H1 (cell line): ENCODE measurements at regions of chr20 and their contacts with region 1.

Region 1: GRCh38 chr20:36886859-36887751 is 11.2 kb downstream of the TLDC2 start:
- DNase-seq: peak; percentile 86 to 99
- H3K4me3 ChIP-seq: 0 out of 8 replicates have a peak overlapping the region, but pooled peaks of 1 of the 4 experiments have one; percentile 19
- H3K27ac ChIP-seq: no peak overlapping the region; the same call in 1 of the 2 replicates
- H3K4me1 ChIP-seq: peaks cover 4 to 12% (median 7%) of the 10 kb centered on the region in 4 experiments
- H3K27me3 ChIP-seq: no peaks in the 10 kb centered on the region
- CTCF ChIP-seq: peak; percentile 92 to 98 (median 92)
- EP300 ChIP-seq: no peak; a peak in 1 of 3 replicates
- POLR2A ChIP-seq: no peak
- RAD21 ChIP-seq: peak; percentile 98

Region 2: DNA sequence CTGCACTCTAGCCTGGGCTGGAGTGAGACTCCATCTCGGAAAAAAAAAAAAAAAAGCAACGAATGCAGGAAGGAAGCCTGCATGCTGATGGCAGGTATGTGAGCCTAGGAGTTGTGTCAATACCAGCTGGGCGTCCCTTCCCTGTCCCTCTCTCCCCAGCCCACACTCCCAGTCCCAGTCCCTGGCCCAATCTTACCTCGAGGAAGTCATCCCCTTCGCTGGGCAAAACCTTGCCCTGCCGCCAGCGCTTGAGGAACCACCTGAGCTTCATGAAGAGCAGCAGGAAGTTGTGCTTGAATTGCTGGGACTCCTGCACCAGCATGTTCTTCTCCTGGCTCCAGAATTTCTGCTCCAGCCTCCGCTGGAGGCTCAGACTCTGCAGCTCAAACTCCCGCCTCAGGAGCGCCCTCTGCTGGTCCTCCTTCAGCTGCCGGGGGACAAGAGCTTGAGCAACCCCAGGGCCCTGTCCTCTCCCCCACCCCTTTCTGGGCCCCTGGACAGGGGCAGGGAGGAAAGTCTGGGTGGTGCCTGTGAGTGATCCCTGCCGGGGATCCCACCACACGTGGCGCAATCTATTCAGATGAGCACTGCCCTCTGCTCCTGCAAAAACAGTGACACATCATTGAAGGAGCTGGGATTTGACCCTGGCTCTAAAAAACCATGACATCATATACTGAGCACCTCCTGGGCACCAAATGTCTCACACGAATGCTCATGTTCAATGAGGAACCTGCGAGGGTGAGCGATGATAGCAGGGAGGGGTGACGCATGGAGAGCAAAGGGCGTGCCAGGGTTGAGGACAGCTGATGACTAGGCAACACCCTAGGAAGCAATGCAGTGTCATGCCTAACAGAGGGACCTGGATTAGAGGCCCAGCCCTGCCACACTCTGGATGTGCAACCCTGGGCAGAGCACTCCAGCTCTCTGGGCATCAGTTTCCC is 78.5 kb before region 1 on chr20:
- CTCF ChIA-PET with region 1: interaction called, 15 read pairs
- POLR2A ChIA-PET with region 1: no interaction called
- DNase-seq: peak; percentile 29 to 93
- H3K4me3 ChIP-seq: no peak overlapping the region
- H3K27ac ChIP-seq: no peak overlapping the region
- H3K4me1 ChIP-seq: no peaks in the 10 kb centered on the region
- H3K27me3 ChIP-seq: no peaks in the 10 kb centered on the region
- CTCF ChIP-seq: peak; percentile 82 to 84 (median 83)
- EP300 ChIP-seq: no peak
- POLR2A ChIP-seq: no peak
- RAD21 ChIP-seq: peak; percentile 50 to 63; a peak in 3 of 4 replicates

Region 3: GRCh38 chr20:36835453-36836198 is 51.5 kb before region 1 on chr20:
- CTCF ChIA-PET with region 1: interaction called, 17 read pairs
- POLR2A ChIA-PET with region 1: interaction called, 3 read pairs
- DNase-seq: peak; percentile 76 to 87
- H3K4me3 ChIP-seq: peak overlapping the region; percentile 1 to 52 (median 18); a peak in 4 of 8 replicates
- H3K27ac ChIP-seq: peak overlapping the region; percentile 52; the same call in 1 of the 2 replicates
- H3K4me1 ChIP-seq: peaks cover 0 to 7% (median 4%) of the 10 kb centered on the region in 4 experiments; a peak in 4 of 7 replicates
- H3K27me3 ChIP-seq: no peaks in the 10 kb centered on the region
- CTCF ChIP-seq: no peak
- EP300 ChIP-seq: no peak
- POLR2A ChIP-seq: peak in 1 of 2 experiments; percentile 82; a peak in 2 of 3 replicates
- RAD21 ChIP-seq: no peak

Region 4: GRCh38 chr20:36856691-36857635 is 30.1 kb before region 1 on chr20:
- CTCF ChIA-PET with region 1: interaction called, 13 read pairs
- POLR2A ChIA-PET with region 1: interaction called, 3 read pairs
- DNase-seq: no peak
- H3K4me3 ChIP-seq: no peak overlapping the region
- H3K27ac ChIP-seq: no peak overlapping the region
- H3K4me1 ChIP-seq: peaks cover 0 to 21% (median 16%) of the 10 kb centered on the region in 4 experiments; a peak in 6 of 7 replicates
- H3K27me3 ChIP-seq: peaks cover 0 to 3% (median 1%) of the 10 kb centered on the region in 4 experiments; a peak in 3 of 7 replicates
- CTCF ChIP-seq: no peak
- EP300 ChIP-seq: no peak
- POLR2A ChIP-seq: no peak
- RAD21 ChIP-seq: no peak

Region 5: GRCh38 chr20:36872852-36873251 is 14.3 kb before region 1 on chr20:
- CTCF ChIA-PET with region 1: interaction called, 26 read pairs
- POLR2A ChIA-PET with region 1: interaction called, 4 read pairs
- DNase-seq: no peak
- H3K4me3 ChIP-seq: no peak overlapping the region
- H3K27ac ChIP-seq: no peak overlapping the region
- H3K4me1 ChIP-seq: peaks cover 0 to 3% (median under 1%) of the 10 kb centered on the region in 4 experiments; a peak in 4 of 7 replicates
- H3K27me3 ChIP-seq: no peaks in the 10 kb centered on the region; a peak in 1 of 7 replicates
- CTCF ChIP-seq: no peak
- EP300 ChIP-seq: no peak
- POLR2A ChIP-seq: no peak
- RAD21 ChIP-seq: no peak

Region 6: DNA sequence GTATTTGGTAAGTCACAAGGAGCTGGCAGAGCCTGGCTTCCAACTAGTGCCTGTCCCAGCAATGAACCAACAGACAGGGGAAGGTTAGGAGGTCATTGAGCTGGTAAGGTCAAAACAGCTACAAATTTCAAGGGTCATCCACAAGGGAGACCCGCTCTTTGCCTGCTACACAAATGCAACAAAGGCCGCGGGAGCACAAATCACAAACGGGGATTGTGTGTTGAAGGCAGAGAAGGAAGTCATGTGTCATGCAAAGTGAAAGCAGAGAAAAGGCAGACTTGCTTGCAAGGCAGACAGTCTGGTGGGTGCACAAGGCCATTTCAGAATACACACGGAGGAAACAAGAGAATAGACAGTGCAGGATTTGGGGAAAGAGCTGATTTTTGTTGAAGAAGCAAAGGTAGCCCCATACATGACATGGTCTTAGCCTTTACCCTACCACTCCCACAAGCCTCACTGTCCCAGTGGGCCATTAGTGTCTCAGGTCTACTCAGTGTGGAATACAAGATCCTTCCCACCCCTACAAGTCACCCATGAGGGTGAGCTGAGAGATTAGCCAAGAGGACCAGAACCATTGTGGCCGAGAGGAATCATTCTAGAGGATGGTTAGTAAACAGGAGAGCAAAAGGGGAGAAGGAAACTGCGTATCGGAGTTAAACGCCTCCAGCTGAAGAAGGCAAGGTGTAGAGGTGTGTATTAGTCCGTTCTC is 82.5 kb after region 1 on chr20:
- CTCF ChIA-PET with region 1: no interaction called
- POLR2A ChIA-PET with region 1: no interaction called
- DNase-seq: no peak
- H3K4me3 ChIP-seq: no peak overlapping the region
- H3K27ac ChIP-seq: no peak overlapping the region
- H3K4me1 ChIP-seq: no peaks in the 10 kb centered on the region
- H3K27me3 ChIP-seq: no peaks in the 10 kb centered on the region
- CTCF ChIP-seq: no peak
- EP300 ChIP-seq: no peak
- POLR2A ChIP-seq: no peak
- RAD21 ChIP-seq: no peak